OCI-LY7 (cell line): ENCODE measurements at regions of chr9 and their contacts with region 1.

Region 1: GRCh38 chr9:123349691-123350480 is 6.1 kb upstream of the CRB2 start:
- DNase-seq: peak; percentile 83
- H3K4me3 ChIP-seq: peak overlapping the region; percentile 13
- H3K27ac ChIP-seq: no peak overlapping the region
- H3K4me1 ChIP-seq: peaks cover 50% of the 10 kb centered on the region
- CTCF ChIP-seq: peak; percentile 98

Region 2: DNA sequence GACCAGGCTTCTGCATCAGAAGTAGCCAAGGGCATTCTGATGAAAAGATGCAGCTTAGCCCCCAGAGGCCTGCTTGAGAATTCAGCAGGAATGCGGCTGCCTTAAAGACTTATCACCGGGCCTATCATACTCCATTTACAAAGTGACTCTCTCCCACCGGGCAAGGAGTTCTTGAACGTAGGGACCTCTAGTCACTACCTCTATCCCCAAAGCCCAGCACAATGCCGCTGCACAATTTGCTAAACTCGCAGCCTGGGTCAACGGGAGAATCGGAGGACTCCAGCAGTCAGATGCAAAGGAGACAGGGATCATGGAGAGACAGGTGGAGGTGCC is 522.2 kb before region 1 on chr9:
- CTCF ChIA-PET with region 1: no interaction called
- POLR2A ChIA-PET with region 1: no interaction called
- intact Hi-C with region 1: loop called (anchors 10 kb)
- DNase-seq: peak; percentile 12
- H3K4me3 ChIP-seq: peak overlapping the region; percentile 86
- H3K27ac ChIP-seq: peak overlapping the region; percentile 59
- H3K4me1 ChIP-seq: peaks cover 21% of the 10 kb centered on the region
- CTCF ChIP-seq: no peak

Region 3: DNA sequence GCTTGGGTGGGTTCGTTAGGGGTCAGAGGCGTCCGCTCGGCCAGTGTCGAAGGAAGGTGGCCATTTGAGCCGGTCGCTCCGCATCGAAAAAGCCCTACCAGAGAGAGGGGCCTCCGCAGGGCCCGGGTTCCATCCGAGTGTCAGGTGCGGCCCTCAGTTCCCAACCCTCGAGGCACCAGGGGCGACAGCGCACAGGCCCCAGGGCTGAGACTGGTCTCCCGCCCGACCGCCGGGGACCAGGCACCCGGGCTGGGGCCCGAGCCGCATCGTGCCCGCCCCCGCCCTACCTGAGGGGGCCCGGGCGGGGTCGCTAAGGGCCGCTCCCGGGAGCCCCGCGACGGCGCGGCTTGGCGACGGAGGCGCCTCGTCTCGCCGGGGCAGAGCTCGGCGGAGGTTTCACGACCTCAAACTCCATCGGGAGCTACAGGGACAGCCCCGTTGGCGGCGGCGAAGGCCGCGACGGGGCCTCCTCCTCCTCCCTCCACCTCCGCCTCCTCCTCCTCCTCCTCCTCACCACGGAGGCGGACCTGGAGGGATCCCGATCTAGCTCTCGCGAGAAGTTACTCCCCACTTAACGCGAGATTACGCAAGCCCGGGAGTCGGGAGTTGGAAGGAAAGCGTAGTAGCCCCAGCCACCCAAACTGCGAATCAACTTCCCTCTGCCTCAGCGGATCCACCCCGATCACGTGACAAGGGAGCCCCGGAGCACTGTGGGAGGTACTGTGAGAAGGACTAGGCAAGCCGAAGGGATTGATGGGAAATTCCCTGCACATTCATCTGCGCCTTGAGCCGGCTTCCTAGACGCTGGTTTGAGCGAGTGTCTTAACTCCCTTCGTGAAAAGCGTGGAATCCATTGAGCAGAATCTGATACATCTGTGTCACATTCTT is 444.8 kb before region 1 on chr9 and contains the start of gene RC3H2:
- CTCF ChIA-PET with region 1: no interaction called
- POLR2A ChIA-PET with region 1: no interaction called
- intact Hi-C with region 1: loop called (anchors 10 kb)
- DNase-seq: peak; percentile 100
- H3K4me3 ChIP-seq: peak within 1 kb of the TSS; percentile 82
- H3K27ac ChIP-seq: peak within 1 kb of the TSS; percentile 75
- H3K4me1 ChIP-seq: peaks cover 35% of the 10 kb centered on the region
- CTCF ChIP-seq: no peak
- total RNA-seq, gene RC3H2: 45.0 and 46.2 TPM in 2 replicates

Region 4: DNA sequence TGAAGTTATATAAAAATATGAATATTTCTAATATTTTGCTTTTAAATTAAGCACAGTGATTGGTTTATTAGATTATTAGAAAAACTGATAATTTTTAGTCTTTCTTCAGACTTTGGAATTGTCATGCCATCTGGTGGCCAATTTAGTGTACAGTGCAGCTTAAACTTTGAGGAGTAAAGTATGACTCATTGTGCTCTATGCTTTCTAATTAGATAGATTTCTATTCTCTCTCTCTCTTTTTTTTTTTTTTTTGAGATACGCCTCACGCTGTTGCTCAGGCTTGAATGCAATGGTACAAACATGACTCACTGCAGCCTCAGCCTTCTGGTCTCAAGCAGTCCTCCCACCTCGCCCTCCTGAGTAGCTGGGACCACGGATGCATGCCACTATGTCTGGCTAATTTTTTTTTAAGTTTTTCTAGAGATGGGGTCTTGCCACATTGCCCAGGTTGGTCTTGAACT is 358.5 kb before region 1 on chr9:
- CTCF ChIA-PET with region 1: no interaction called
- POLR2A ChIA-PET with region 1: no interaction called
- intact Hi-C with region 1: loop called (anchors 5 kb)
- DNase-seq: peak; percentile 51
- H3K4me3 ChIP-seq: no peak overlapping the region
- H3K27ac ChIP-seq: no peak overlapping the region
- H3K4me1 ChIP-seq: no peaks in the 10 kb centered on the region
- CTCF ChIP-seq: peak; percentile 95

Region 5: GRCh38 chr9:123081824-123082223 is 268.1 kb before region 1 on chr9:
- CTCF ChIA-PET with region 1: interaction called, 5 read pairs
- POLR2A ChIA-PET with region 1: interaction called, 3 read pairs
- intact Hi-C with region 1: loop called (anchors 1 kb)
- DNase-seq: peak; percentile 65
- H3K4me3 ChIP-seq: no peak overlapping the region
- H3K27ac ChIP-seq: no peak overlapping the region
- H3K4me1 ChIP-seq: peaks cover 29% of the 10 kb centered on the region
- CTCF ChIP-seq: peak; percentile 94

Region 6: DNA sequence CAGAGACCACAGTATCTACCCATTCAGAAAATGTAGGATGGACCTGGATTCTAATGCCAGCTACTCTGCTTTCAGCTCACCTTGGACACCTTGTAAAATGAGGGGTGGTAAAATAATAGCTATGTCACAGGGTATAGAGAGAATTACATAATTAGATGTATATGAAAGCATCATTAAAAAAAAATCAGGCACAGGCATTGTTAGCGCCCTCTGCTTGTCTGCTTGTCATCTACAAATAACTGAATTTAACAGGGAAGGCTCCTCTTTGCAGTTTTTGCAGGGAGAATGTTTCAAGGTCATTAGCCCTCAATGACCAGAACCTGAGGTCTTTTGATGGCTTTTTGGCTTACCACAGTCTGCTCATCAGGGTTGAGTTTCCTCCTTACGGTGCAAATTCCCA is 258.4 kb before region 1 on chr9:
- CTCF ChIA-PET with region 1: interaction called, 11 read pairs
- POLR2A ChIA-PET with region 1: interaction called, 3 read pairs
- intact Hi-C with region 1: no loop called
- DNase-seq: peak; percentile 51
- H3K4me3 ChIP-seq: no peak overlapping the region
- H3K27ac ChIP-seq: peak overlapping the region; percentile 60
- H3K4me1 ChIP-seq: peaks cover 80% of the 10 kb centered on the region
- CTCF ChIP-seq: peak; percentile 88

Region 7: GRCh38 chr9:123302348-123303214 is 47.3 kb before region 1 on chr9:
- CTCF ChIA-PET with region 1: no interaction called
- POLR2A ChIA-PET with region 1: no interaction called
- intact Hi-C with region 1: no loop called
- DNase-seq: no peak
- H3K4me3 ChIP-seq: no peak overlapping the region
- H3K27ac ChIP-seq: no peak overlapping the region
- H3K4me1 ChIP-seq: peaks cover 19% of the 10 kb centered on the region
- CTCF ChIP-seq: no peak

Region 8: GRCh38 chr9:123322273-123323195 is 27.4 kb before region 1 on chr9:
- CTCF ChIA-PET with region 1: no interaction called
- POLR2A ChIA-PET with region 1: no interaction called
- intact Hi-C with region 1: no loop called
- DNase-seq: peak; percentile 87
- H3K4me3 ChIP-seq: peak overlapping the region; percentile 41
- H3K27ac ChIP-seq: peak overlapping the region; percentile 63
- H3K4me1 ChIP-seq: peaks cover 57% of the 10 kb centered on the region
- CTCF ChIP-seq: no peak

Region 9: DNA sequence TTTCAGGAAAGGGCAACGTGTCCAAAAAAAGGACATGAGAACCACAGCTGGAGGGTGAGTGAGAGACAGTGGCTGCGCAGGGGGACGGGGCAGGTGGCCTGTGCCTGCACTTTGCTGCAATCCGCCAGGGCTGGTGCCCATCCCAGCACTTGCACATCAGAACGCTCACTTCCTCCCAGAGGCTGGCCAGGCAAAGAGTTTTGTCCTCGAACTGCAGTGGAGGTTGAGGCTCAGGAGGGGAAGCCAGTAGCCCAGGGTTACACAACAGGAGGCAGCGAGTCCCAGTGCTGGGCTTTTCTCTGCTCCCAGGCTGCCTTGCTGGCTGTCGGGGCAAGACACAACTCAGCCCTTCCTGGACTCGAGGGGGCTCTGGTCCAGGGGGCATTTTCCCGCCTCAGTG is 39.2 kb after region 1 on chr9:
- CTCF ChIA-PET with region 1: interaction called, 3 read pairs
- POLR2A ChIA-PET with region 1: no interaction called
- intact Hi-C with region 1: loop called (anchors 1 kb)
- DNase-seq: no peak
- H3K4me3 ChIP-seq: no peak overlapping the region
- H3K27ac ChIP-seq: no peak overlapping the region
- H3K4me1 ChIP-seq: no peaks in the 10 kb centered on the region
- CTCF ChIP-seq: no peak

Region 10: DNA sequence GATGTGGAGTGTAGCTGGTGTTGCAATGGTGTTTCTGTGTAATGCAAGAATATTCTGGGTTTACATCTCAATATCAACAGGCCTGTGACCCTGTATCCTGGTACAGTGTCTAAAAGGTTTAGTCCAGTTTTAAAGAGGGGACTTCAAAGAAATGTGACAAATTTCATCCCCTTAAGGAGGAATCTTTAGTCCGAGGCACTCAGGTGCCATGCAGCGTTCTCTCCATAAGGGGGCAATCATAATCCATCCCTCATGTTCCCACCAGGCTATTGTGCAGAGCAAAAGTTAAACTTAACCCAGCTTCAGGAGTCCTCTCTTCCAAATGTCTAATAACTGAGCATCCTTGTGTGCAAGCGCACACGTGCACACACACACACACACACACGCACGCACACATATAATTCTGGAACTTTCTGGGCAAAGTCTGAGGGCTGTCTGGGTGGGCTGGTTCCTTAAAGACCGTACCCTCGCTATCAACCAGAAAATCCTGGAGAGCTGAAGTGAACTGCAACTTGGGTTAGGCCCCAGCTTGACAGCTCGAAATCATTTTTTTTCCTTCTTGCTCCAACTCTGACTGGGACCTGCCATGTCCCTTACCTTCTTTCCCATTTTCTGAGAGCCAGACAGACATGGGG is 52.1 kb after region 1 on chr9:
- CTCF ChIA-PET with region 1: no interaction called
- POLR2A ChIA-PET with region 1: no interaction called
- intact Hi-C with region 1: no loop called
- DNase-seq: peak; percentile 55
- H3K4me3 ChIP-seq: no peak overlapping the region
- H3K27ac ChIP-seq: no peak overlapping the region
- H3K4me1 ChIP-seq: no peaks in the 10 kb centered on the region
- CTCF ChIP-seq: peak; percentile 86